Common myeloid progenitor, CD34-positive (primary cell): ENCODE measurements at regions of chr11 and their contacts with region 1.

Region 1: DNA sequence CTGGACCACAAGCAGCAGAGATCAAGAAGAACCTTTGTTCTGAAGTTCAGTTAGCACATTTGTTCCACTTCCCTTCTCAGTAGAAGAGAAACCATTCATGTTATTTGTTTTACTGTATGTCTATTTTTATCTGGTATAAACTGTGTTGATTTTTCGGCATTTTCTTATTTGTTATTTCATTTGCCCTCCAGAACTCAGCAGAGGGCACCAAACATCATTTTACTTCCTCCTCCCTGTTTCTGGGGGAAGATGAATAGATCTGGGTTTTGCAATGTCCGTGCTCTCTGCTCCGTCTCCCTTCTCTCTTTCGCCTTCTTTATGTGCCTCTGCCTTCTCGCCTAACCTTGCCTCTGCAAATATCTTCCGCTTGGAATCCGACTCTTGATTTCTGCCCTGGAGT is 366.9 kb downstream of the NTM start:
- DNase-seq: peak in 2 of 3 donors; percentile 19 to 29
- H3K4me3 ChIP-seq: no peak overlapping the region
- H3K27ac ChIP-seq: no peak overlapping the region
- H3K4me1 ChIP-seq: no peaks in the 10 kb centered on the region
- H3K27me3 ChIP-seq: peaks cover 0 to 30% (median 6%) of the 10 kb centered on the region in 5 experiments

Region 2: DNA sequence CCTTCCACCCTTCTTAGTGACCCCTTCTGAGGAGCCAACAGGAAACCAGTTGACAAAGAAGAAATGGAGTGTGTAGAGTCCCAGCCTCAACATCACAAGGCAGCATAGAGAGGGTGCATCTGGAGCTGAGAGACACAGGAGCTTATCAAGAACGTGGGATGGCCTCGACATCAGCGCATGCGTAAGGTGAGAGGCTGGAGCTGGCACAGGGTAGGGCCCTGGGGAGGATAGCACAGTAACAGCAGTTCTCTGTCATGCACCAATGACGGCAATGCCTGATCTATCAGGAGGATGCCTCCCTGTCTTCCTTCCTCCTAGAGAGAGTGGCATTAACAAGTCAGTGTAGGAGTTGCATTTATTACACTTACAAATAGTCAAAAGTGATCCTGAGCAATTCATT is 59.2 kb after region 1 on chr11:
- CTCF ChIA-PET with region 1: no interaction called
- POLR2A ChIA-PET with region 1: interaction called, 12 read pairs
- DNase-seq: no peak
- H3K4me3 ChIP-seq: no peak overlapping the region
- H3K27ac ChIP-seq: no peak overlapping the region
- H3K4me1 ChIP-seq: no peaks in the 10 kb centered on the region
- H3K27me3 ChIP-seq: peaks cover 0 to 10% (median 2%) of the 10 kb centered on the region in 5 experiments

Region 3: DNA sequence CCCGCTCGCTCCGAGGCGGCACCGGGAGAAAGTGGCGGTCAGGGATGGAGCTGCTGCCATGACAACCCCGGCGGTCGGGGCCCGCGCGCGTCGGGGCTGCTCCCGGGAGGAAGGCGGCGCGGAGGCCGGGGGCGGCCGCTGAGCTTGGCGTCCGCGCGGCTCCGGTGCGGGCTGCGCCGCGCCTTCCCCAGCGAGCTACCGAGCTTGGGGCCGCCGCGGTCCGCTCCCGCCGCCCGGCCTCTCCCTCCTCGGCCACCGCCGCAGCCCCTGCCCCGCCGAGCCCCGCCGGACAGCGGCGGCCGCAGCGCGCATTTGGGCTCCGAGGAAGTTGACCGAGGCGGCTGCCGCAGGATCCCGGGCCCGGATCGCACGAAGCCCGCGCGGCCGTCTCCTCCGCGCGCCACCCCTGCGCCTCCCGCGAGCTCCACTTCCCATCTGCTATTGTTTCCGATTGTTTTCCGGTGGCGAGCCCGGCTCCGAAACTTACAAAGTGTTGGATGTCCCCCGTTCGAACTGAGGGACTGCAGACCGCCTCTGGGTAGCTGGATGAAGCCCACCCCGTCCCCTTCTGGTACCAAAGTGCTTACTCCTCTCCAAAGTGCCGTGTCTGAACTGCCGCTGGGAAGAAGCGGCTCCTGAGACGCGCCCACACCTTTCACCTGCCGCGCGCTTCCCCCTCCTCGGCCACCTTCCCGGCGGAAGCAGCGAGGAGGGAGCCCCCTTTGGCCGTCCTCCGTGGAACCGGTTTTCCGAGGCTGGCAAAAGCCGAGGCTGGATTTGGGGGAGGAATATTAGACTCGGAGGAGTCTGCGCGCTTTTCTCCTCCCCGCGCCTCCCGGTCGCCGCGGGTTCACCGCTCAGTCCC is 173.4 kb after region 1 on chr11:
- CTCF ChIA-PET with region 1: no interaction called
- POLR2A ChIA-PET with region 1: no interaction called
- DNase-seq: peak in 2 of 3 donors; percentile 26 to 57
- H3K4me3 ChIP-seq: peak overlapping the region in 4 of 7 experiments; percentile 32 to 43 (median 40)
- H3K27ac ChIP-seq: no peak overlapping the region
- H3K4me1 ChIP-seq: peaks cover 0 to 16% (median 10%) of the 10 kb centered on the region in 4 experiments
- H3K27me3 ChIP-seq: peaks cover 31 to 85% (median 40%) of the 10 kb centered on the region in 5 experiments